PC-3 (cell line): ENCODE measurements at regions of chr6 and their contacts with region 1.

Region 1: GRCh38 chr6:52995913-52996645 is 995 bp upstream of the GSTA4 start:
- DNase-seq: peak; percentile 75
- ATAC-seq: no peak
- H3K4me3 ChIP-seq: peak overlapping the region; percentile 60
- H3K27ac ChIP-seq: no peak overlapping the region
- H3K4me1 ChIP-seq: peaks cover 24% of the 10 kb centered on the region
- H3K27me3 ChIP-seq: no peaks in the 10 kb centered on the region
- CTCF ChIP-seq: no peak

Region 2: DNA sequence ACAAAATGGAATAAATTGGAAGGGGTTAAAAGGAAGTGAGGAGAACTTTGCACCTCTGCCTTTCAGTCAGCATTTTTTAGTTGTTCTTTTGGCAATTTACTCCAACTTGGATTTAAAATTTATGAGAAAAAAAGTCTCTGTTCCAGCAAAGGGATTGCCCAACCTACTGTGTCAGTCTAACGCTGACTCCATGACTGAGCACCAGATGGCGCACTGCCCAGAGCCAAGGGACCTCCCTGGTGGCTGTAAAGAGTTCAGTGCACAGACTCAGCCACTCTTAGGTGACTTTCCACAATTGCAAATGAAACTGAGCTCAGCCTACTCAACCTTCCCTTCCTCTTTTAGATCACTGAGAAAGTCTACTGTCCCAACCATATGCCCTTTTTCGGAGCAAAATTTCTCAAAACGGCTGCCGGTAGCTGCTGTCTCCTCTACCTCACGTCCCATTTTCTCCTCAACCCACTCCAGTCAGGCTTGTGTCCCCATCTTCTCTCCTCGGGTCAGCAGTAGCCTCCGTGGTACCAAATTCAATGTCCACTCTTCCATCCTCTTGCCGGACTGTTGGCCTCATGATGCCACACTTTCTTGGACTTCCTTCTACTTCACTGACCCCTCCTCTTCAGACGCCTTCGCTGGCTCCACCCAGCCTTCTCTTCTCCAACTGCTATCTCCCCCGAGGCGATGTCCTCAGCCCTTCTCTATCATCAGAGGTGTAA is 271.5 kb before region 1 on chr6:
- CTCF ChIA-PET with region 1: no interaction called
- POLR2A ChIA-PET with region 1: no interaction called
- intact Hi-C with region 1: loop called (anchors 5 kb)
- DNase-seq: peak; percentile 80
- ATAC-seq: peak; percentile 35; the same call in 1 of the 2 replicates
- H3K4me3 ChIP-seq: peak overlapping the region; percentile 31
- H3K27ac ChIP-seq: peak overlapping the region; percentile 94
- H3K4me1 ChIP-seq: peaks cover 48% of the 10 kb centered on the region
- H3K27me3 ChIP-seq: no peaks in the 10 kb centered on the region
- CTCF ChIP-seq: peak; percentile 86

Region 3: GRCh38 chr6:52881996-52882841 is 113.9 kb before region 1 on chr6:
- CTCF ChIA-PET with region 1: interaction called, 3 read pairs
- POLR2A ChIA-PET with region 1: no interaction called
- intact Hi-C with region 1: loop called (anchors 1 kb)
- DNase-seq: peak; percentile 84
- ATAC-seq: peak; percentile 98
- H3K4me3 ChIP-seq: peak overlapping the region; percentile 69
- H3K27ac ChIP-seq: no peak overlapping the region
- H3K4me1 ChIP-seq: peaks cover 11% of the 10 kb centered on the region
- H3K27me3 ChIP-seq: no peaks in the 10 kb centered on the region
- CTCF ChIP-seq: peak; percentile 85

Region 4: DNA sequence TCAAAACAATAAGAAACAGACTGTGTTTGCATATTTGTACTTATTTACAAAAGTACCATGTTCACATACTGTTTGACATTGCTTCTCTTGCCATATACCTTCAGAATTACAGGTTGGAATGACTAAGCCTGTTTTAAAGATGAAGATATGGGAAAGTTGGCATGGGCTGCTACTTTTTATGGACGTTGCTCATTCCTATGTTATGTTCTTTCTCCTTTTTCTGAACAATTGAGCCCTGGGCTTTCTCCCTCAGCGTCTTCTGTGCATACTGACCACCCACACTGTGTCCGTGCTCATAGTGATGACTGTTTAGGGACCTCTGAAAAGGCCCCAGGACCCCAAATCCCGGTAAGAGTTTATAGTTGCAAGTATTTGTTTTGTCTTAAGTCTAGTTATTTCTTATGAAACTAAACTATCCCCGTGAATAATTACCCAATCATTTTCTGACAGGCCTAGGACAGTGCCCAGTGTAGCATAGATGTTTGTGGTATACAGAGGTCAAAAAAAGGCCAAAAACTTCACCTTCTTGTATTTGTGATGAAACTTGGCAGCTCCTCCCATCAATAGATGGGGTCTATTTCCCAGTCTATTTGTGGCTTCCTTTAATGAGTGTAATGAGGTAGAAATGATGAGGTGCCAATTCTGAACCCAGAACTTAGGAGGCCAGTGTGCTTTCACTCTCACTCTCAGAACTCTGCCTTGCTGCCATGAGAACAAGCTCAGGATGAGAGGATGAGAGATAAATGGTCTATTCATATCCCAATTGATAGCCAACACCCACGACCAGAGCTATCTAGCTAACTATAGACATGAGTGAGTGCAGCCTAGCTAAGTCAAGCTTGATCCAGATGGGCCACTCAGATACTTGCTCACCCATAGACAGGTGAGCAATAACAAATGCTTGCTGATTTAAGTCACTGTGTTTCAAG is 41.9 kb before region 1 on chr6:
- CTCF ChIA-PET with region 1: no interaction called
- POLR2A ChIA-PET with region 1: no interaction called
- intact Hi-C with region 1: loop called (anchors 5 kb)
- DNase-seq: peak; percentile 91
- ATAC-seq: peak; percentile 96
- H3K4me3 ChIP-seq: peak overlapping the region; percentile 20; the same call in 1 of the 2 replicates
- H3K27ac ChIP-seq: peak overlapping the region; percentile 54
- H3K4me1 ChIP-seq: peaks cover 18% of the 10 kb centered on the region
- H3K27me3 ChIP-seq: no peaks in the 10 kb centered on the region
- CTCF ChIP-seq: no peak